Right lobe of liver (tissue), 6 donors: ENCODE measurements at regions of chr10 and their contacts with region 1.

Region 1: DNA sequence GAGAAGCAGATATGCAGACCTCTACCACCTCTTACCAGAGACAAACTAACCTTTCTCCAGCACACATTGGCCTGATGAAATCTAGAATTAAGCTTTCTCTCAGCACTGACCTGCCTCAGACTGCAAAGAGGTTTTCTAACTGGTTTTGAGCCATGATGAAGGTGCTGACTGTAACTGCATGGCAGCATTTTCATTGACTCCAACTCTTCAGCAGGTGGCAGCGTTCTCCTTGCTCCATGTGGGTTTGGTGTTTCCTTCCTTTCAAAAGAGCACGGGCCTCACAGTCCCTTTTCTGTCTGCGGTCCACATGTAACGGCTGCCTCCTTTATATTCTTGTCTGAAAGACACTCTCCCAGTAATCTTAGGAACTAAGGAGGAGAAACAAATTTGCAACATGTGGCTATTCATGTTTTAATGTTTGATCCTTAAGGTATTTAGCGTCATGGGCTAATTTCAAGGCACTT is 12.6 kb downstream of the KLLN start:
- DNase-seq: peak; percentile 49 to 65 (median 60)
- ATAC-seq: peak; percentile 98 to 99 (median 99)
- H3K4me3 ChIP-seq: no peak overlapping the region
- H3K27ac ChIP-seq: no peak overlapping the region
- H3K4me1 ChIP-seq: peaks cover 0 to 8% (median 2%) of the 10 kb centered on the region in 4 donors
- H3K27me3 ChIP-seq: no peaks in the 10 kb centered on the region
- CTCF ChIP-seq: peak; percentile 64 to 77 (median 70)
- POLR2A ChIP-seq: no peak

Region 2: GRCh38 chr10:88392222-88392621 is 541.4 kb after region 1 on chr10:
- intact Hi-C with region 1: loop called (anchors 10 kb)
- DNase-seq: no peak
- ATAC-seq: peak; percentile 60 to 81 (median 76)
- H3K4me3 ChIP-seq: no peak overlapping the region
- H3K27ac ChIP-seq: no peak overlapping the region
- H3K4me1 ChIP-seq: peaks cover 0 to 15% (median 7%) of the 10 kb centered on the region in 4 donors
- H3K27me3 ChIP-seq: no peaks in the 10 kb centered on the region
- CTCF ChIP-seq: no peak
- POLR2A ChIP-seq: no peak